Motor neuron (in vitro differentiated cells): ENCODE measurements at regions of chr7 and their contacts with region 1.

Region 1: GRCh38 chr7:155815332-155816191 is 3.3 kb upstream of the SHH start:
- ATAC-seq: peak in 7 of 8 experiments; percentile 50 to 91 (median 67)
- H3K4me3 ChIP-seq: no peak overlapping the region
- H3K27ac ChIP-seq: no peak overlapping the region
- H3K4me1 ChIP-seq: peaks cover 0 to 8% of the 10 kb centered on the region in 2 donors

Region 2: DNA sequence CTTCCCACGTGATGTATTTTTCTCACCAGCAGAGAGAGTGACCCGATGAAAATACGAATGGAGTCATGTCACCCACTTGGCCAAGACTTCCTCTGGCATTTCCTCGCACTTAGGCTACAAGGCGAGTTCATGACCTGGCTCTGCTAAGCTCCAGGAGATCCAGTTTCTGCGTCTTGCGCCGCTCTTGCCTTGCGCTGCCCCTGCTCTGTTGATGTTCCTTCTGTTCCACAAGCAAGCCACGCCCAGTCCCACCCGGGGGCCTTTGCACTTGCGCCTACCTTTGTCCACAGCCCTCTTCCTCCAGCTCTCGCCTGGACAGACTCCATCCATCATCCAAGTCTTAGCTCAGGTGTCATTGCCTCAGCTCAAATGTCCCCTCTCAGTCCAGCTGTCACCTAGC is 113.0 kb after region 1 on chr7:
- in situ Hi-C with region 1: no loop called
- ATAC-seq: no peak
- H3K4me3 ChIP-seq: no peak overlapping the region
- H3K27ac ChIP-seq: no peak overlapping the region
- H3K4me1 ChIP-seq: no peaks in the 10 kb centered on the region

Region 3: GRCh38 chr7:156473476-156474240 is 658.1 kb after region 1 on chr7:
- in situ Hi-C with region 1: loop called in 3 of 9 experiments (anchors 10 to 25 kb)
- ATAC-seq: peak in 3 of 8 experiments; percentile 38 to 67 (median 47)
- H3K4me3 ChIP-seq: no peak overlapping the region
- H3K27ac ChIP-seq: no peak overlapping the region
- H3K4me1 ChIP-seq: no peaks in the 10 kb centered on the region

Region 4: DNA sequence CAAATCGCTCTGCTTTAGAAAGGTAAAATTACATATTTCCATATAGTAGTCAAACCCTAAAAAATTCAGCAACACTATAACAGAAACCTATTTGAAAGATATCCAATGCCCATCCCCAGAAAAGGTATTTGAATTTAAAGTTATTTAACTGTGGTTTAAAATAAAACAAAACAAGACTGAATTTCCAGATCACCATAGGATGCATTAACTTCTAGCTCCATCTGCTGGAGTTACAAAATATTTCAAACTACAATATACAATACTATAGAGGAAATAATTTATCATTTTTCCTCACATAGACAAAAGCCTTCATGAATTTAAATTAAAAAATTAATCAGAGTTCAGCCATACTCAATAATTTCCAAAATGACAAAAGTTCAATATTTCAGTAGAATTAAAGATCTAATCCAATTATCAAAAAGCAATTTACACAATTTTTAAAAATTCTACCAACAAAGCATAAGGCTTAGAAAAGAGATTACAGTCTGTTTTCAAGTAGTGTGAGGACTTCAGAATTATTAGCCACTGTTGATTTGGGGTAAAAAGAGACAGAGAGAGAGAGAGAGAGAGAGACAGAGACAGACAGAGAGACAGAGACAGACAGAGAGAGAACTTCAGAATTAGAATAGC is 1001.5 kb after region 1 on chr7:
- in situ Hi-C with region 1: loop called in 2 of 9 experiments (anchors 25 kb)
- ATAC-seq: peak in 3 of 8 experiments; percentile 23 to 44 (median 39)
- H3K4me3 ChIP-seq: no peak overlapping the region
- H3K27ac ChIP-seq: no peak overlapping the region
- H3K4me1 ChIP-seq: no peaks in the 10 kb centered on the region